ENCODE measurements at regions of chr9 and their contacts with region 1.

Region 1: DNA sequence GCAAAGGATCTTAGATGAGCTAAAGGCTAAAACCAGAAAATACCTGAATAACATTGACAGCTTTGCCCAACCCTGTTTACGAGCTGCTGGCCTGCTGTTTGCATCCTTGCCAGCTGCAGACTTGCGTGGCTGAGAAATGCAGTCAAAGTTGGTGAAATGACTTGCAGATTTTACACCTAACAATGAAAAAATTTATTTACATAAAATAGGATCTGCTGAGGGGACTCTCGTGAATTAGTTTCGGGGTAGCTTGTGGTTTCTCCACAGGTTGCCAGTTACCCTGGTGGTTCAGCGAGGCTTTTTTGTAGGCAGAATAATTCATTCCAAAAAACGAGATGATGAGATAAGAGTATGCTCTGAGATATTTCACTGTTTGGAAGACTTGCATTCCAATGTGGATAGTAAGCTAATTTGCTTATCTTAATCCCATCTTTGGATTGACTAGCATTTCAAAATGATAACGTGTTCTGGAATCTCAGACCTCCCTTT is 65.7 kb upstream of the FANCC start:
- DNase-seq: no peak
- H3K4me3 ChIP-seq: no peak overlapping the region
- H3K4me3 Mint-ChIP-seq: no peak overlapping the region
- H3K27ac ChIP-seq: no peak overlapping the region
- H3K27ac Mint-ChIP-seq: no peak overlapping the region
- H3K4me1 ChIP-seq: no peaks in the 10 kb centered on the region
- H3K4me1 Mint-ChIP-seq: peaks cover 0 to 4% (median 2%) of the 10 kb centered on the region in 4 donors
- H3K27me3 ChIP-seq: no peaks in the 10 kb centered on the region
- H3K27me3 Mint-ChIP-seq: peaks cover 31% of the 10 kb centered on the region in 2 donors

Region 2: DNA sequence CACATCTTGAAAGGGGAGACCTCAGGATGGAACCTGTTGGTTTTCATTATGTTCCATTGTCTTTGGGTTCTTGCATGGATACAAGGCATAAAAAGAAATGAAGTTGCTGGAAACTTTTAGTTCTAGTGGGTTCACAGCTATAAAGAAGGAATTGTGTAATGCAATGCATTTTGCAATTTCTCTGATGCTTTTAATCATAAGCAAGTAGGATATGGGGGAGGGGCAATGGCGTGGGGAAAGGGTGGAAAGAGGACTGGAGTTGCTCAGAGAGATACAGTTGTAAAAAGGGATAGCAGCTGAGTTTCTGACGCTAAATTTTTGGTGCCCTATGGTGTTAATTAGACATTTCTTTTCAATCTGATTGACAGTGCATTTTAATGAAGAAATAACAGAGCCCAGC is 22.9 kb after region 1 on chr9:
- CTCF ChIA-PET with region 1: no interaction called
- POLR2A ChIA-PET with region 1: no interaction called
- intact Hi-C with region 1: no loop called
- DNase-seq: no peak
- H3K4me3 ChIP-seq: no peak overlapping the region
- H3K4me3 Mint-ChIP-seq: no peak overlapping the region
- H3K27ac ChIP-seq: no peak overlapping the region
- H3K27ac Mint-ChIP-seq: no peak overlapping the region
- H3K4me1 ChIP-seq: no peaks in the 10 kb centered on the region
- H3K4me1 Mint-ChIP-seq: no peaks in the 10 kb centered on the region
- H3K27me3 ChIP-seq: no peaks in the 10 kb centered on the region
- H3K27me3 Mint-ChIP-seq: peaks cover 9 to 12% of the 10 kb centered on the region in 2 donors

Region 3: GRCh38 chr9:96061293-96061987 is 678.2 kb after region 1 on chr9:
- CTCF ChIA-PET with region 1: interaction called, 6 read pairs
- POLR2A ChIA-PET with region 1: no interaction called
- intact Hi-C with region 1: loop called (anchors 1 kb)
- DNase-seq: peak; percentile 33 to 58 (median 47)
- H3K4me3 ChIP-seq: no peak overlapping the region
- H3K4me3 Mint-ChIP-seq: no peak overlapping the region
- H3K27ac ChIP-seq: no peak overlapping the region
- H3K27ac Mint-ChIP-seq: peak overlapping the region in 1 of 7 donors; percentile 31
- H3K4me1 ChIP-seq: peaks cover 4% of the 10 kb centered on the region
- H3K4me1 Mint-ChIP-seq: peaks cover 1 to 5% (median 5%) of the 10 kb centered on the region in 4 donors
- H3K27me3 ChIP-seq: no peaks in the 10 kb centered on the region
- H3K27me3 Mint-ChIP-seq: peaks cover 0 to 3% of the 10 kb centered on the region in 2 donors

Region 4: DNA sequence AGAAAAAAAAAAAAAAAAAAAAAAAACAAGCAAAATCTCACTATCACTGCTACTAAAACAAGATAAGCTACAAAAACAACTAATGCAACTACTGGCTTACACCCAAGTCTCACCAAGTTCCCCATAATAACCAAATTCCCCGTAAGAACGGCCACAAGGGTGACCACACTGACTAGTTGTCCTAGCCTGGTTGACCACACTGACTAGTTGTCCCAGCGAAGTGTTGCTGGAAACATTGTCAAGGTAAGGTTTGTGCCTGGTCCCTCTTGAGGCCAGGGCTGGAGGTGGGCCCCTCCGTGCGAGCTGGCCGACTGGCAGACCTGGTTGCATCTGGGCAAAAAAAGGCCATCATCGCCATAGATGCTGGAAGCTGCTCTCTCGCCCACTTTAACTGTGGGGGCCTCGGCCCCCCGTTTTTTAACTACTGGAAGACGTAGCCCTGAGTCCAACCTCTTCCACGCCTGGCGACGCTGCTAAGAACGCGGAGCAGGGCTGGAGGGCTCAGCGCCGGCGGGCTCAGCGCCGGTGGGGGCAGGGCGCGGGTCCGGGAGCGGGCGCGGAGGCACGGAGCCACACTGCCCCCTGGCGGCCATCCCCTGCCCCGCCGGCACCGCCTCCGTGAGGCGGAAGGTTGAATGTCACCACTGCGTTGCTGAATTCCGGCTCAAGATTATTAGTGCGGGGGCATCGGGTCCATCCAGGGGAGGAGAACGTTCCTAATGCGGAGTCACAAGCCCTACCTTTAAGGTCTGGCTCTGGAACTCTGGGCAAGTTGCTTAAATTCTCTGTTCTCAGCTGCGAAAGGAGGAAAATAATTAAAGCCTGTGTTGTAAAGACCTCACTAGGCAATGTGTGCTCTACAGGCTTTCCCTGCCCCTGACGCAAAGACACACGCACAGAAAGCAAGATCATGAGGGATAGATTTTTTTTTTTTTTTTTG is 834.8 kb after region 1 on chr9:
- CTCF ChIA-PET with region 1: interaction called, 14 read pairs
- POLR2A ChIA-PET with region 1: no interaction called
- intact Hi-C with region 1: loop called (anchors 2 kb)
- DNase-seq: peak in 4 of 5 donors; percentile 62 to 65 (median 64)
- H3K4me3 ChIP-seq: peak overlapping the region in 1 of 2 donors; percentile 14
- H3K4me3 Mint-ChIP-seq: peak overlapping the region; percentile 59 to 89 (median 74)
- H3K27ac ChIP-seq: no peak overlapping the region
- H3K27ac Mint-ChIP-seq: peak overlapping the region in 2 of 7 donors; percentile 53 to 81
- H3K4me1 ChIP-seq: peaks cover 9% of the 10 kb centered on the region
- H3K4me1 Mint-ChIP-seq: peaks cover 3 to 18% (median 6%) of the 10 kb centered on the region in 4 donors
- H3K27me3 ChIP-seq: peaks cover 10% of the 10 kb centered on the region
- H3K27me3 Mint-ChIP-seq: peaks cover 28 to 39% of the 10 kb centered on the region in 2 donors

Region 5: GRCh38 chr9:96317335-96317980 is 934.2 kb after region 1 on chr9:
- CTCF ChIA-PET with region 1: no interaction called
- POLR2A ChIA-PET with region 1: no interaction called
- intact Hi-C with region 1: loop called (anchors 10 kb)
- DNase-seq: peak in 4 of 5 donors; percentile 24 to 40 (median 30)
- H3K4me3 ChIP-seq: no peak overlapping the region
- H3K4me3 Mint-ChIP-seq: no peak overlapping the region
- H3K27ac ChIP-seq: no peak overlapping the region
- H3K27ac Mint-ChIP-seq: peak overlapping the region in 2 of 7 donors; percentile 5 to 76
- H3K4me1 ChIP-seq: no peaks in the 10 kb centered on the region
- H3K4me1 Mint-ChIP-seq: peaks cover 0 to 2% (median 0%) of the 10 kb centered on the region in 4 donors
- H3K27me3 ChIP-seq: no peaks in the 10 kb centered on the region
- H3K27me3 Mint-ChIP-seq: peaks cover 0 to 2% of the 10 kb centered on the region in 2 donors

Region 6: GRCh38 chr9:96884438-96884837 is 1501.2 kb after region 1 on chr9:
- CTCF ChIA-PET with region 1: no interaction called
- POLR2A ChIA-PET with region 1: no interaction called
- intact Hi-C with region 1: no loop called
- DNase-seq: no peak
- H3K4me3 ChIP-seq: no peak overlapping the region
- H3K4me3 Mint-ChIP-seq: no peak overlapping the region
- H3K27ac ChIP-seq: no peak overlapping the region
- H3K27ac Mint-ChIP-seq: no peak overlapping the region
- H3K4me1 ChIP-seq: no peaks in the 10 kb centered on the region
- H3K4me1 Mint-ChIP-seq: no peaks in the 10 kb centered on the region
- H3K27me3 ChIP-seq: no peaks in the 10 kb centered on the region
- H3K27me3 Mint-ChIP-seq: peaks cover 0 to 2% of the 10 kb centered on the region in 2 donors